HEK293T (cell line): ENCODE measurements at regions of chr16 and their contacts with region 1.

Region 1: DNA sequence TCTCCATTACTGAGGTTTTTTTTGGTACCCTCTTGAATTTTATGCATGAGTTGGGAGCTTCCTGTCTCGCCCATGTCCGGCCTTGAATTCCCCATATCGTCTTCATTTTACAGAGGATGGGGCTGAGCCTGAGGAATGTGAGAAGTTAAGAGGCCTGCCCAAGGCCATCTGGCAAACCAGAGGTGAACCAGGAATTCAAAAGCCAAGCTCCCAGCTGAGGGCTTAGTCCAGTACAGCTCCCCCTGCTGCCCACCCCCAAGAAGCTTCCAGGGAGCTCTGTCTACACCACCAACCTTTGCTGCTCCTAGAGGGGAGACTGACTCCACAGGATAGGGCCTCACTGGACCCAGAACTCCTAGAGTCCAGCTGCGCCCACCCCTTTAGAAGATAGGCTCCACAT is 20.7 kb upstream of the C16orf78 start:
- DNase-seq: peak; percentile 39

Region 2: DNA sequence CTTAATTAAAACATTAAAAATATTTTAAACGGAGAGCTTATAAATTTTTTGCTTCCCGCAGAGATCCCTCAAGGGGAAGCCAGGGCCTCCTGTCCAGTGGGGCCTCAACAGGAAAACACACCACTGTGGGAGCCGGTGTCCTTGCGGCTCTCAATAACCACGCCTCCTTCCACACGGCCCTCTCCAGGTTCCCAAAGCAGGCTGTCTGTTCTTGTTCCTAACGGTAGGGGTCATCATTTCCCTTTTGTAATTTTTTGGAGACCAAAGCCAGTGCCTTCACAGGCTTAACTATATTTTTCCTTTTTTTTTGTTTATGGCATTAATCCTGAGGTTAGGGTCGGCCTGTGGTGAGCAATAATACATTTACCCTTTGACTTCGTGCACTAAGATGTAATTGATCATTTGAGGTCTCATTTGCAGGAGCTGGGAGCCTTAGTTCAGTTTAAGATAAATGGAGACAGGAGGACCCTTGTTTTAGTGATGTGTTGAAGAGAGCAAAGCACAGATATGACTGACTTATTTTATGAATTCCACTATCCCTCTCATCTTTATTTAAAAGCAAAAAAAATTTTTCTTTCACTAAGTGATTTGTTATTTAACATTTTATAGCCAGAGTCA is 665.4 kb before region 1 on chr16:
- CTCF ChIA-PET with region 1: interaction called, 11 read pairs
- POLR2A ChIA-PET with region 1: no interaction called
- DNase-seq: peak; percentile 75

Region 3: GRCh38 chr16:49338611-49339265 is 14.2 kb before region 1 on chr16:
- CTCF ChIA-PET with region 1: no interaction called
- POLR2A ChIA-PET with region 1: no interaction called
- DNase-seq: no peak

Region 4: DNA sequence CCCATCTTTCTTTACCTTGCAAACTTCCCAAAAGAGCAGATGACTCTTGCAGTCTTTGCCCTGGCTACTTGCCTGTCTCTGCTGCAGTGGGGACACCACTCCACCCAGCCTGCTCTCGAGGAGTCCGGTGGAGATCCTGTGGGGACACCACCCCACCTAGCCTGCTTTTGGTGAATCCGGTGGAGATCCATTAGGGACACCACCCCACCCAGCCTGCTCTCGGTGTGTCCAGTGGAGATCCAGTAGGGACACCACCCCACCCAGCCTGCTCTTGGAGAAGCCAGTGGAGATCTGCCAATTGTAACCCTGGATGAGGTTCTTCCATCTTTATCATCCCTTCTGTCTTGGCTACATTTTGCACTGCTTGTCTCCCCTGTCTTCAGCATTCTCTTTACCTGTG is 74.9 kb after region 1 on chr16:
- CTCF ChIA-PET with region 1: no interaction called
- POLR2A ChIA-PET with region 1: no interaction called
- DNase-seq: no peak